HepG2 (cell line): ENCODE measurements at regions of chr11 and their contacts with region 1.

Region 1: DNA sequence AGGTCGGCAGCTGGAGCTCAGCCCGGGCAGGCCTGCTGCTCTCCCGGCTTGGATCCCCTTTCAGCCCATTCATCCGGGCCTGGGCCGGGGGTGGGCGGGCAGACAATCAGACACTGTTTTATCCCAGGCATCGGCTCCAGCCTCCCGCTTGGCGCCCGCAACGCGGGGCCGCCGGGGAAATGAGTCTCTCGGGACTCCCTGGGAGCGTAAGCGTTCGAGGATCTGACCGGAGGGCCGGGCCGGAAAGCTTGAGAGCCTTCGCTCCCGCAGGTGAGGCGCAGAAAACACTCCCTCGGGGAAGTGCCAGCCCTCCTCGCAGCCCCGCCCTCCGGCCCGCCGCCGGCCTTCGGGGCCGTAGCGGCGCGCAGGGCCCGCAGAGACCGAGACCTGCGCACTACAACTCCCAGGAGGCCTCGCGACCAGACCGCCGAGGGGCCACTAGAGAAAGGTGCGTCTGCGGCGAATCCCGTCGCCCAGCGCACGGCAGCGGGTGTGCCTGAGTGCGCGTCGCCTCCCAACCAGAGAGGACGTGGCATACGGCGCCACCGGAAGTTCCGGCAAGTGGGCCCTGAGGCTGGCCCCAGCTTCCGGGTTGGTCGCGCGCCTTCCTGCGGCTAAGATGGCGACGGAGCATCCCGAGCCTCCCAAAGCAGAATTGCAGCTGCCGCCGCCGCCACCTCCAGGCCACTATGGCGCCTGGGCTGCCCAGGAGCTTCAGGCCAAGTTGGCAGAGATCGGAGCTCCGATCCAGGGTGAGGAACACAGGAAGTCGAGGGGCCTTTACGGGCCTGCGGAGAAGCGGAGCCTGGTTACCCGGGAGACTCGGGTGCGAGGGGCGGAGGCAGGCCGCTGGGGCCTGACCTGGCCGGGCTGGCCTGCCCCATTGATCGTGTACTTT is at the start of gene SF3B2:
- DNase-seq: peak; percentile 95
- ATAC-seq: peak; percentile 96
- H3K4me3 ChIP-seq: peak within 1 kb of the TSS; percentile 83 to 93 (median 93)
- H3K27ac ChIP-seq: peak within 1 kb of the TSS; percentile 79
- H3K4me1 ChIP-seq: peaks cover 40% of the 10 kb centered on the region
- H3K27me3 ChIP-seq: peaks cover 0 to 23% of the 10 kb centered on the region in 2 experiments; a peak in 3 of 5 replicates
- CTCF ChIP-seq: peak; percentile 24; the same call in 1 of the 2 replicates
- EP300 ChIP-seq: no peak
- POLR2A ChIP-seq: peak; percentile 76 to 82
- RAD21 ChIP-seq: 0 out of 2 replicates have a peak, but pooled peaks have one; percentile 20
- total RNA-seq, gene SF3B2: 153 and 162 TPM in 2 replicates

Region 2: DNA sequence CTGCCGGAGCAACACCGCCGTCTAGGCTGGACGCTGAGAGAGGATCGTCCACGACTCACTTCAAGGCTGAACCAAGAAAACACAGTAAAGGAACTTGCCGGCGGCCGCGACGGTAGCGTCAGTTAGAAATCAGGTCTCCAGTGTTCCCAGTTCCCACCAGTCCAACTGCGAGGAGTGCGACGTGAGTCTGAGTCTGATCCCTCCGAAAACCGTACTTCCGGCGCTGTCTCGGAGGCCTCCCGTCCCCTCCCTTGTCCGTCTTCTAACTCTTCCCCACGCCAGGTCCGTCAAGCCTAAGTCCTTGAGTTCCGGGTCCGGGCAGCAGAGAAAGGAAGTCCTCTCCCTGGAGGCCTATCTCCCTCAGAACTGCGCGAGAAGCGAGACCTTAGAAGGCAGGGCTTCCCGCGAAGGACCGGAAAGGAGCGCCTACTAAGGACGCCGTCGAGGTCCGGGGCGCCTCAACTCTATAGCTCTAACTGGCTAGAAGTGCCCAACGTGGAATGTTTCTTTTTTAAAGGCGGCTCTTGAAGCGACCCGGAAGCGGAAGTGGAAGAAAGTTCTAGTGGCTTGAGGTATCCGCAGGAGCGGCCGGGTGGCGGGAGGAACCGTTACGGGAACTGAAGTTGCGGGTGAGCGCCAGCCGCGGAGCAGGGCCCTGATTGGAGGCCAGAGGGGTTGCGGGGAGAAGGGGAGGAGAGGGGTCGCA is 49.9 kb before region 1 on chr11 and contains the starts of genes BANF1 and EIF1AD:
- CTCF ChIA-PET with region 1: no interaction called
- POLR2A ChIA-PET with region 1: interaction called, 18 read pairs
- in situ Hi-C with region 1: no loop called
- intact Hi-C with region 1: loop called (anchors 1 kb)
- DNase-seq: peak; percentile 96
- ATAC-seq: peak; percentile 85
- H3K4me3 ChIP-seq: peak within 1 kb of the TSS; percentile 81 to 92 (median 88)
- H3K27ac ChIP-seq: peak within 1 kb of the TSS; percentile 94
- H3K4me1 ChIP-seq: peaks cover 35% of the 10 kb centered on the region
- H3K27me3 ChIP-seq: no peaks in the 10 kb centered on the region; a peak in 1 of 5 replicates
- CTCF ChIP-seq: peak; percentile 44; the same call in 1 of the 2 replicates
- EP300 ChIP-seq: peak in 1 of 2 experiments; percentile 53; a peak in 1 of 4 replicates
- POLR2A ChIP-seq: peak; percentile 87 to 90
- RAD21 ChIP-seq: peak; percentile 43; the same call in 1 of the 2 replicates
- total RNA-seq, gene BANF1: 40.5 and 45.9 TPM in 2 replicates
- total RNA-seq, gene EIF1AD: 30.8 and 45.9 TPM in 2 replicates

Region 3: GRCh38 chr11:66069715-66070603 is 17.9 kb after region 1 on chr11 and contains the start of gene PACS1:
- CTCF ChIA-PET with region 1: no interaction called
- POLR2A ChIA-PET with region 1: interaction called, 40 read pairs
- in situ Hi-C with region 1: no loop called
- intact Hi-C with region 1: no loop called
- DNase-seq: peak; percentile 25
- ATAC-seq: peak; percentile 48
- H3K4me3 ChIP-seq: peak within 1 kb of the TSS; percentile 82 to 88 (median 86)
- H3K27ac ChIP-seq: peak within 1 kb of the TSS; percentile 59
- H3K4me1 ChIP-seq: peaks cover 59% of the 10 kb centered on the region
- H3K27me3 ChIP-seq: no peaks in the 10 kb centered on the region
- CTCF ChIP-seq: no peak
- EP300 ChIP-seq: no peak
- POLR2A ChIP-seq: peak in 1 of 2 experiments; percentile 46; a peak in 1 of 4 replicates
- RAD21 ChIP-seq: no peak; the same call in none of the 2 replicates
- total RNA-seq, gene PACS1: 7.6 and 12.2 TPM in 2 replicates

Region 4: GRCh38 chr11:66328307-66329144 is 276.5 kb after region 1 on chr11:
- CTCF ChIA-PET with region 1: no interaction called
- POLR2A ChIA-PET with region 1: no interaction called
- in situ Hi-C with region 1: no loop called
- intact Hi-C with region 1: no loop called
- DNase-seq: peak; percentile 71
- ATAC-seq: peak; percentile 85
- H3K4me3 ChIP-seq: peak overlapping the region; percentile 36 to 76 (median 47)
- H3K27ac ChIP-seq: peak overlapping the region; percentile 45
- H3K4me1 ChIP-seq: peaks cover 57% of the 10 kb centered on the region
- H3K27me3 ChIP-seq: peaks cover 0 to 17% of the 10 kb centered on the region in 2 experiments; a peak in 3 of 5 replicates
- CTCF ChIP-seq: peak; percentile 97
- EP300 ChIP-seq: no peak
- POLR2A ChIP-seq: no peak
- RAD21 ChIP-seq: peak; percentile 87